ENCODE measurements at regions of chr6 and their contacts with region 1.

Region 1: GRCh38 chr6:32622545-32623401 is 14.4 kb upstream of the HLA-DQA1 start:
- DNase-seq: peak; percentile 94
- ATAC-seq: peak; percentile 66
- H3K4me3 ChIP-seq: peak overlapping the region in 4 of 5 experiments; percentile 18 to 41 (median 34)
- H3K4me3 Mint-ChIP-seq: peak overlapping the region; percentile 82
- H3K27ac ChIP-seq: peak overlapping the region; percentile 97 to 99
- H3K27ac Mint-ChIP-seq: peak overlapping the region; percentile 98
- H3K4me1 ChIP-seq: peaks cover 58 to 62% of the 10 kb centered on the region in 2 donors
- H3K4me1 Mint-ChIP-seq: peaks cover 65% of the 10 kb centered on the region
- H3K27me3 ChIP-seq: no peaks in the 10 kb centered on the region
- H3K27me3 Mint-ChIP-seq: no peaks in the 10 kb centered on the region
- CTCF ChIP-seq: peak; percentile 72

Region 2: DNA sequence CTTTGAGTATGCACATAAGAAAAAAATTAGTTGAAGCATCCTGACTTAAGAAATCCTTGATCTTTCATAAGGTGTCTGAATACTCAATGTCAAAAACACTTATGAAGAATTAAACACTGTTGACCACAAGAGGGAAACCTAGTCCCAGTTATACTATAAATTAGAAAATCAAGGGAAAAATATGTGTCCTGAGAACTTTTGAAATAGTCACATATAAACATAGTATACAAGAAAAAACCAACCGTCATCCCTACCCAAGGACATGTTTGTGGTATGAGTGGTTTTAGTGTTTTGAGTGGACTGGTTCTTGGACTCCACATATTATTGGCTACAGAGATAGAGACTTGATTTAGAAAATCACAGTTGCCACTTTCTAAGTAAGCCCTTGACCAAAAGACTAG is 190.7 kb before region 1 on chr6:
- CTCF ChIA-PET with region 1: interaction called, 10 read pairs
- POLR2A ChIA-PET with region 1: interaction called, 7 read pairs
- intact Hi-C with region 1: no loop called
- DNase-seq: peak; percentile 78
- ATAC-seq: peak; percentile 38
- H3K4me3 ChIP-seq: no peak overlapping the region
- H3K4me3 Mint-ChIP-seq: no peak overlapping the region
- H3K27ac ChIP-seq: no peak overlapping the region
- H3K27ac Mint-ChIP-seq: peak overlapping the region; percentile 63
- H3K4me1 ChIP-seq: peaks cover 21 to 27% of the 10 kb centered on the region in 2 donors
- H3K4me1 Mint-ChIP-seq: peaks cover 32% of the 10 kb centered on the region
- H3K27me3 ChIP-seq: no peaks in the 10 kb centered on the region
- H3K27me3 Mint-ChIP-seq: no peaks in the 10 kb centered on the region
- CTCF ChIP-seq: peak; percentile 83

Region 3: DNA sequence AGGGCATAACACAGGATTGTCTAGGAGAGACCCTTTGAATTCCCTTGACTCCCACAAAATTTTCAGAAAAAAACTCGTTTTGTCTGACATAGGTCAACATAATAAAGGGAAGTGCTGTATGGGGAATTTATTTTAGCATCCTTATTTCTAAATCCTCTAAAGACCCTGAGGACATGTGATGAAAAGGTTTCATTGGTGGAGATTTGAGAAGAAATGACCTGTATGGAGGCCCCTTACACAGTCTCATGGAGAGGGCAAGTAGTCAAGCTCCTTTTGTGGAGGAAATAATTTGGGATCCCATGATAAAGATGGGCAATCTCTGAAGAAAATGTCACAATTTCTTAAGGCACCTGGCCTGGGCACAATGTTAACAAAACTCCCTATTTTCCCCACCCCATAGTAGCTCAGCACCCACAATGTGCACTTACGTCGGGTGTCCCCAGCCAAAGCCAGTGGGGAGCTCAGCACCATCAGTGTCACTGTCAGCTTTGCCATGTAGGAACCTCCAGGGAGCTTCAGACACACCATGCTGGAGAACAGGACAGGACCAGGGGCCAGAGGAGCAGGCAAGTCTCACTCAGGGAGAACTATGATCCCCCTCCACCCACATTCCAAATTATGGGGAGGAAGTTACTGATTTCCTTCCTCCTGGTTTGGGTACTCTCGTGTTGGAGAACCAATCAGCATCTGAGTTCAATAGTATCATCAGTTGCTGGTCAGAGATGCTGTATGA is 92.9 kb before region 1 on chr6 and contains the start of gene HLA-DRB5:
- CTCF ChIA-PET with region 1: no interaction called
- POLR2A ChIA-PET with region 1: interaction called, 14 read pairs
- intact Hi-C with region 1: no loop called
- DNase-seq: peak; percentile 85
- ATAC-seq: peak; percentile 74
- H3K4me3 ChIP-seq: peak within 1 kb of the TSS; percentile 56 to 74 (median 62)
- H3K4me3 Mint-ChIP-seq: peak within 1 kb of the TSS; percentile 94
- H3K27ac ChIP-seq: peak within 1 kb of the TSS; percentile 79 to 94
- H3K27ac Mint-ChIP-seq: peak within 1 kb of the TSS; percentile 100
- H3K4me1 ChIP-seq: peaks cover 4 to 10% of the 10 kb centered on the region in 2 donors
- H3K4me1 Mint-ChIP-seq: peaks cover 27% of the 10 kb centered on the region
- H3K27me3 ChIP-seq: no peaks in the 10 kb centered on the region
- H3K27me3 Mint-ChIP-seq: no peaks in the 10 kb centered on the region
- CTCF ChIP-seq: no peak
- total RNA-seq, gene HLA-DRB5: 174 and 184 TPM in 2 replicates

Region 4: GRCh38 chr6:32604434-32604877 is 18.3 kb before region 1 on chr6:
- CTCF ChIA-PET with region 1: interaction called, 8 read pairs
- POLR2A ChIA-PET with region 1: interaction called, 34 read pairs
- intact Hi-C with region 1: loop called (anchors 1 kb)
- DNase-seq: peak; percentile 87
- ATAC-seq: peak; percentile 74
- H3K4me3 ChIP-seq: peak overlapping the region in 4 of 5 experiments; percentile 39 to 57 (median 42)
- H3K4me3 Mint-ChIP-seq: peak overlapping the region; percentile 87
- H3K27ac ChIP-seq: peak overlapping the region; percentile 99 to 100
- H3K27ac Mint-ChIP-seq: peak overlapping the region; percentile 97
- H3K4me1 ChIP-seq: peaks cover 52 to 57% of the 10 kb centered on the region in 2 donors
- H3K4me1 Mint-ChIP-seq: peaks cover 69% of the 10 kb centered on the region
- H3K27me3 ChIP-seq: no peaks in the 10 kb centered on the region
- H3K27me3 Mint-ChIP-seq: no peaks in the 10 kb centered on the region
- CTCF ChIP-seq: no peak

Region 5: GRCh38 chr6:32637219-32637880 is 14.6 kb after region 1 on chr6 and contains the start of gene HLA-DQA1:
- CTCF ChIA-PET with region 1: interaction called, 59 read pairs
- POLR2A ChIA-PET with region 1: interaction called, 82 read pairs
- intact Hi-C with region 1: loop called (anchors 1 kb)
- DNase-seq: peak; percentile 94
- ATAC-seq: peak; percentile 89
- H3K4me3 ChIP-seq: peak within 1 kb of the TSS; percentile 49 to 100 (median 66)
- H3K4me3 Mint-ChIP-seq: peak within 1 kb of the TSS; percentile 99
- H3K27ac ChIP-seq: peak within 1 kb of the TSS; percentile 94 to 98
- H3K27ac Mint-ChIP-seq: peak within 1 kb of the TSS; percentile 99
- H3K4me1 ChIP-seq: peaks cover 44 to 52% of the 10 kb centered on the region in 2 donors
- H3K4me1 Mint-ChIP-seq: peaks cover 68% of the 10 kb centered on the region
- H3K27me3 ChIP-seq: no peaks in the 10 kb centered on the region
- H3K27me3 Mint-ChIP-seq: no peaks in the 10 kb centered on the region
- CTCF ChIP-seq: no peak
- total RNA-seq, gene HLA-DQA1: 463 and 489 TPM in 2 replicates

Region 6: GRCh38 chr6:32685603-32686002 is 62.8 kb after region 1 on chr6:
- CTCF ChIA-PET with region 1: interaction called, 5 read pairs
- POLR2A ChIA-PET with region 1: interaction called, 12 read pairs
- intact Hi-C with region 1: loop called (anchors 1 kb)
- DNase-seq: peak; percentile 90
- ATAC-seq: peak; percentile 80
- H3K4me3 ChIP-seq: peak overlapping the region in 1 of 5 experiments; percentile 48
- H3K4me3 Mint-ChIP-seq: peak overlapping the region; percentile 60
- H3K27ac ChIP-seq: peak overlapping the region; percentile 89 to 99
- H3K27ac Mint-ChIP-seq: peak overlapping the region; percentile 92
- H3K4me1 ChIP-seq: peaks cover 43 to 54% of the 10 kb centered on the region in 2 donors
- H3K4me1 Mint-ChIP-seq: peaks cover 73% of the 10 kb centered on the region
- H3K27me3 ChIP-seq: no peaks in the 10 kb centered on the region
- H3K27me3 Mint-ChIP-seq: no peaks in the 10 kb centered on the region
- CTCF ChIP-seq: no peak